ENCODE measurements at regions of chr7 and their contacts with region 1.

Region 1: GRCh38 chr7:151080522-151081169 is at the start of gene FASTK:
- DNase-seq: peak; percentile 31
- H3K4me3 ChIP-seq: peak within 1 kb of the TSS; percentile 87
- CTCF ChIP-seq: no peak

Region 2: GRCh38 chr7:150756858-150757257 is 323.8 kb before region 1 on chr7:
- CTCF ChIA-PET with region 1: no interaction called
- POLR2A ChIA-PET with region 1: no interaction called
- DNase-seq: no peak
- H3K4me3 ChIP-seq: no peak overlapping the region
- CTCF ChIP-seq: no peak

Region 3: GRCh38 chr7:150974468-150975391 is 105.9 kb before region 1 on chr7:
- CTCF ChIA-PET with region 1: no interaction called
- POLR2A ChIA-PET with region 1: no interaction called
- DNase-seq: no peak
- H3K4me3 ChIP-seq: peak overlapping the region; percentile 34
- CTCF ChIP-seq: peak; percentile 17

Region 4: GRCh38 chr7:151057989-151058780 is 22.5 kb before region 1 on chr7:
- CTCF ChIA-PET with region 1: interaction called, 11 read pairs
- POLR2A ChIA-PET with region 1: interaction called, 7 read pairs
- DNase-seq: peak; percentile 98
- H3K4me3 ChIP-seq: peak overlapping the region; percentile 73
- CTCF ChIP-seq: no peak

Region 5: DNA sequence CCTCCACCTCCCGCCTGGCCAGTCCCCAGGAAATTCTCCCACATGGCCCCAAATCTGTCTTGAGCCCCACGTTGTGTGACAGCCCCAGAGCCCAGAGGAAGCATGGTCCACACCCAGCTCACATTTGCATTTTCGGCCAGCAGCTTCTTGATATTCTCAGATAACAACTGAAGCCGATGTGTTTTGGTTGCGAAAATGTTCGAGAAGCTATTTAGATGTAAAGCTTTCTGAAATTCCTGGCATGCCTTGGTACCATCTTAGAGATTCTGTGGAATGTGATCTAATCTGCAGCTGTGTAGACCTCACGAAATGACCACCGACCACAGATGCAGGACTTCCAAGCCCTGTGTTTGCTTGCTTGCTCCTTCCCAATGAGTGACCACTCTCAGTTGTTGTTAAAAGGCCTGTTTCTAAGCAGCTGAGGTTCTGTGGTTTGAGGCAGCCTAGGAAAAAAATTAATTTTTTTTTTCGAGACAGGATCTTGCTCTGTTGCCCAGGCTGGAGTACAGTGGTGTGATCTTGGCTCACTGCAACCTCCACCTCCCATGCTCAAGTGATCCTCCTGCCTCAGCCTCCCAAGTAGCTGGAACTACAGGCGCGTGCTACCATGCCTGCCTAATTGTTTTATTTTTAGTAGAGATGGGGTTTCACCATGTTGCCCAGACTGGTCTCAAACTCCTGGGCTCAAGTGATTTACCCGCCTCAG is 12.4 kb before region 1 on chr7:
- CTCF ChIA-PET with region 1: interaction called, 11 read pairs
- POLR2A ChIA-PET with region 1: interaction called, 8 read pairs
- DNase-seq: peak; percentile 36
- H3K4me3 ChIP-seq: no peak overlapping the region
- CTCF ChIP-seq: no peak

Measured in AG04449 (cell line).